ENCODE measurements at regions of chr1 and their contacts with region 1.

Region 1: DNA sequence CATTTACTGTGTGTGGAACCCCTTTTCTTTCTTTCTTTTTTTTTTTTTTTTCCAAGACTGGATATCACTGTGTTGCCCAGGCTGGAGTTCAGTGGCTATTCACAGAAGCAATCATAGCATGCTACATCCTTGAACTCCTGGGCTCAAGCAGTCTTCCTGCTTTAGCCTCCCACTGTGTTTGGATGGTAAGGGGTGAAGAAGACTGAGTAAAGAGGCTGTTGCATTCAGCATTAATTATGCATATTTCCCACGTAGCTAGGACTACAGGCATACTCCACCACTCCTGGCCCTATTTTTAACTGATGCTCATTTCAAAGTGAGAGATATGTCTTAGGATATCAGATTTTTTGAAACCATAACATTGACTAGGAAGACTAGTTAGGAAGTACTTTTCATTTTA is 39.5 kb downstream of the PHACTR4 start:
- DNase-seq: no peak
- ATAC-seq: no peak
- H3K4me3 ChIP-seq: no peak overlapping the region
- H3K4me3 Mint-ChIP-seq: no peak overlapping the region
- H3K27ac ChIP-seq: no peak overlapping the region
- H3K27ac Mint-ChIP-seq: no peak overlapping the region
- H3K4me1 ChIP-seq: peaks cover 0 to 3% of the 10 kb centered on the region in 2 experiments
- H3K4me1 Mint-ChIP-seq: peaks cover 9 to 12% (median 12%) of the 10 kb centered on the region in 3 donors
- H3K27me3 ChIP-seq: no peaks in the 10 kb centered on the region
- H3K27me3 Mint-ChIP-seq: no peaks in the 10 kb centered on the region

Region 2: DNA sequence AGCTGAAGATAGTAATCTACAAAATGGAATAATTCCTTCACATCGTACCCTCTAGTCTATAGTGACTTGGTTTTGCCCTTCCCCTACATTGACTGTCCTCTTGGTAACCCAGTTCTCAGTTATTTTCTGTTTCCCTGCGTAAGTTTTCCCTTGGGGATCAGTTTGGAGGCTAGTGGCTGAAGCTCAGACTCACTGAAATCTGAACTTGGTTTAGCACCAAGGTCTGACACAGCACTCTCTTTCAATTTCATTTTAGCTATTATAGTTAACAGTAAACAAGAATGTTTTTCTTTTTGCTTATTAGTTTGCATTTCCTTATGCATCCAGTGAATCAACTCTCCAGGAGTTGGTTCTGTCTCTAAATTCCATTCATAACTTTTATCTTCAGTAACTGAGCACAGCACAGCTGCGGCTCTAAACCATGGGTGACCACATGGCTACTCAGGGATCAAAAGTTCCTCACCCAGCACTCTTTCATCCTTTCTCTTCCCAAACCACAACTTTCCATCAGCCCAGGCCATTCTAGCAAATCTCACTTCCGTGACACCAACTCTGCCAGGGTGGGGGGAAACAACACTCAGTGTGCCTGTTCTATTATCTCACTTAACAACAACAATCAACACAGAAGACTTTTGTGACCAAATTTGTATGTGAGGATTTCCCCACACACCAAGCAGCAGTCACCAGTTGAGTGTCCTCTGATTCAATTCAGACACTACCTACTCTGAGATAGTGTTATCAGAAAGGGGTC is 719.5 kb before region 1 on chr1:
- CTCF ChIA-PET with region 1: no interaction called
- POLR2A ChIA-PET with region 1: no interaction called
- DNase-seq: no peak
- ATAC-seq: no peak
- H3K4me3 ChIP-seq: no peak overlapping the region
- H3K4me3 Mint-ChIP-seq: no peak overlapping the region
- H3K27ac ChIP-seq: no peak overlapping the region
- H3K27ac Mint-ChIP-seq: no peak overlapping the region
- H3K4me1 ChIP-seq: no peaks in the 10 kb centered on the region
- H3K4me1 Mint-ChIP-seq: peaks cover 0 to 3% (median 0%) of the 10 kb centered on the region in 3 donors
- H3K27me3 ChIP-seq: peaks cover 0 to 17% of the 10 kb centered on the region in 2 experiments
- H3K27me3 Mint-ChIP-seq: no peaks in the 10 kb centered on the region

Region 3: GRCh38 chr1:28359592-28360239 is 49.4 kb before region 1 on chr1:
- CTCF ChIA-PET with region 1: interaction called, 5 to 10 read pairs
- POLR2A ChIA-PET with region 1: no interaction called
- DNase-seq: peak; percentile 28 to 82 (median 68)
- ATAC-seq: peak; percentile 42 to 79 (median 72)
- H3K4me3 ChIP-seq: no peak overlapping the region
- H3K4me3 Mint-ChIP-seq: no peak overlapping the region
- H3K27ac ChIP-seq: no peak overlapping the region
- H3K27ac Mint-ChIP-seq: no peak overlapping the region
- H3K4me1 ChIP-seq: no peaks in the 10 kb centered on the region
- H3K4me1 Mint-ChIP-seq: no peaks in the 10 kb centered on the region
- H3K27me3 ChIP-seq: no peaks in the 10 kb centered on the region
- H3K27me3 Mint-ChIP-seq: no peaks in the 10 kb centered on the region

Region 4: GRCh38 chr1:28426831-28427230 is 17.7 kb after region 1 on chr1:
- CTCF ChIA-PET with region 1: no interaction called
- POLR2A ChIA-PET with region 1: no interaction called
- DNase-seq: no peak
- ATAC-seq: no peak
- H3K4me3 ChIP-seq: no peak overlapping the region
- H3K4me3 Mint-ChIP-seq: no peak overlapping the region
- H3K27ac ChIP-seq: no peak overlapping the region
- H3K27ac Mint-ChIP-seq: no peak overlapping the region
- H3K4me1 ChIP-seq: no peaks in the 10 kb centered on the region
- H3K4me1 Mint-ChIP-seq: peaks cover 0 to 4% (median 2%) of the 10 kb centered on the region in 3 donors
- H3K27me3 ChIP-seq: no peaks in the 10 kb centered on the region
- H3K27me3 Mint-ChIP-seq: no peaks in the 10 kb centered on the region